Heart left ventricle (tissue), 16 donors: ENCODE measurements at regions of chr2 and their contacts with region 1.

Region 1: GRCh38 chr2:234279621-234280020 is 217.3 kb downstream of the ARL4C start:
- DNase-seq: no peak
- ATAC-seq: no peak
- H3K4me3 ChIP-seq: no peak overlapping the region
- H3K27ac ChIP-seq: no peak overlapping the region
- H3K4me1 ChIP-seq: no peaks in the 10 kb centered on the region
- H3K27me3 ChIP-seq: peaks cover 0 to 2% (median 0%) of the 10 kb centered on the region in 9 donors
- CTCF ChIP-seq: no peak
- POLR2A ChIP-seq: no peak

Region 2: GRCh38 chr2:234142530-234142929 is 137.1 kb before region 1 on chr2:
- intact Hi-C with region 1: loop called in 2 of 10 experiments (anchors 5 to 10 kb)
- DNase-seq: no peak
- ATAC-seq: no peak
- H3K4me3 ChIP-seq: no peak overlapping the region
- H3K27ac ChIP-seq: no peak overlapping the region
- H3K4me1 ChIP-seq: peaks cover 0 to 15% (median 1%) of the 10 kb centered on the region in 12 donors
- H3K27me3 ChIP-seq: no peaks in the 10 kb centered on the region
- CTCF ChIP-seq: no peak
- POLR2A ChIP-seq: no peak